Right ventricle myocardium superior (tissue), 1 donor: ENCODE measurements at regions of chr1 and their contacts with region 1.

Region 1: DNA sequence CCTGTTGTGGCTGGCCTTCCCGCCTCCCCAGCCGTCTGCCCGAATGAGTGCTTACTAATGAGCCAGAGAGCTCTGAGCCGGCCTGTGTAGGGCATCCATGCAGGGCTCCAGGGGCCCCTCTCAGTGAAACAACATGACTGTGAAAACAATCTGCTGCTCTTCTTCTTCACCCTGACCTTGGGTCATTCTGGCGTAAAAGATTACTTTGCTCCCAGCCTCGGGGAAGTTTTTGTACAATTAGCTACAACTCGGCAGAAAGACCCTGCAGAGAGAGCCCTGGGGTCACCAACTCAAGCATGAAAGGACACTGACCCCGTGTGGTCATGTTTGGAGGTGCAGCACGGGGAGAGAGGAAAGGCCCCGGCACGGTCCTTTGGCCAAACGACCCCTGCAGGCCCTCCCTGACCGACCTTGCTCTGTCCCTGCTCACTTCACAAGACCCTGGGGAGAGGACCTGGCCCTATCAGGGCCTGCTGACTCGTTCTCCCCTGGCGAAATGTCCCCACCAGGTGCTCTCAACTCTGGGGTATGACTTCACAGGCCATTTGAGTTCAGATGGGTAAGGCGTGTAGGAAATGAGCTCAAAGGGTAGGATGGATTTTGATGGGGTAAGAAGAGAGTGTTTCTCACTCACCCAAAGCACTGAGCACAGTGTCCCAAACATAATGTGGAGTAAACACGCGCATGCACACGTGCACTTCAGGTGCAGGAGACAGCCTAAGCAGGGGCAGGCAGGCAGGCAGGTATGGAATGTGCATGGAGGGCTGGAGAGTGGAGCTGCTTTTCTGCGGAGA is 22.9 kb upstream of the FAM20B start:
- DNase-seq: peak; percentile 86
- ATAC-seq: peak; percentile 86

Region 2: GRCh38 chr1:178542560-178543356 is 460.0 kb before region 1 on chr1:
- intact Hi-C with region 1: loop called (anchors 5 kb)
- DNase-seq: peak; percentile 93
- ATAC-seq: peak; percentile 93

Region 3: GRCh38 chr1:178774263-178774662 is 228.5 kb before region 1 on chr1:
- intact Hi-C with region 1: loop called (anchors 5 kb)
- DNase-seq: no peak
- ATAC-seq: peak; percentile 41

Region 4: GRCh38 chr1:178810585-178810984 is 192.2 kb before region 1 on chr1:
- intact Hi-C with region 1: loop called (anchors 5 kb)
- DNase-seq: no peak
- ATAC-seq: no peak

Region 5: GRCh38 chr1:179425186-179425585 is 422.4 kb after region 1 on chr1:
- intact Hi-C with region 1: no loop called
- DNase-seq: no peak
- ATAC-seq: no peak